Activated CD4-positive, alpha-beta T cell treated with anti-CD3 and anti-CD28 coated beads, Interleukin-2, amount 10 ng/mL, durations not matched to agents 24 days and 14 days (primary cell): ENCODE measurements at regions of chr6 and their contacts with region 1.

Region 1: GRCh38 chr6:89297695-89298351 is 17.3 kb downstream of the GABRR2 start:
- DNase-seq: peak; percentile 90
- H3K4me3 Mint-ChIP-seq: peak overlapping the region; percentile 56
- H3K27ac Mint-ChIP-seq: peak overlapping the region; percentile 86
- H3K4me1 Mint-ChIP-seq: peaks cover 22% of the 10 kb centered on the region
- H3K27me3 Mint-ChIP-seq: no peaks in the 10 kb centered on the region

Region 2: GRCh38 chr6:89638320-89639195 is 340.7 kb after region 1 on chr6 and contains the start of gene LYRM2:
- intact Hi-C with region 1: loop called (anchors 1 kb)
- DNase-seq: peak; percentile 97
- H3K4me3 Mint-ChIP-seq: peak within 1 kb of the TSS; percentile 90
- H3K27ac Mint-ChIP-seq: peak within 1 kb of the TSS; percentile 98
- H3K4me1 Mint-ChIP-seq: peaks cover 26% of the 10 kb centered on the region
- H3K27me3 Mint-ChIP-seq: no peaks in the 10 kb centered on the region
- total RNA-seq, gene LYRM2: 29.4 and 33.7 TPM in 2 replicates

Region 3: GRCh38 chr6:90403489-90404381 is 1105.9 kb after region 1 on chr6:
- intact Hi-C with region 1: no loop called
- DNase-seq: no peak
- H3K4me3 Mint-ChIP-seq: peak overlapping the region; percentile 29
- H3K27ac Mint-ChIP-seq: peak overlapping the region; percentile 88
- H3K4me1 Mint-ChIP-seq: peaks cover 71% of the 10 kb centered on the region
- H3K27me3 Mint-ChIP-seq: no peaks in the 10 kb centered on the region